ENCODE measurements at regions of chr5 and their contacts with region 1.

Region 1: DNA sequence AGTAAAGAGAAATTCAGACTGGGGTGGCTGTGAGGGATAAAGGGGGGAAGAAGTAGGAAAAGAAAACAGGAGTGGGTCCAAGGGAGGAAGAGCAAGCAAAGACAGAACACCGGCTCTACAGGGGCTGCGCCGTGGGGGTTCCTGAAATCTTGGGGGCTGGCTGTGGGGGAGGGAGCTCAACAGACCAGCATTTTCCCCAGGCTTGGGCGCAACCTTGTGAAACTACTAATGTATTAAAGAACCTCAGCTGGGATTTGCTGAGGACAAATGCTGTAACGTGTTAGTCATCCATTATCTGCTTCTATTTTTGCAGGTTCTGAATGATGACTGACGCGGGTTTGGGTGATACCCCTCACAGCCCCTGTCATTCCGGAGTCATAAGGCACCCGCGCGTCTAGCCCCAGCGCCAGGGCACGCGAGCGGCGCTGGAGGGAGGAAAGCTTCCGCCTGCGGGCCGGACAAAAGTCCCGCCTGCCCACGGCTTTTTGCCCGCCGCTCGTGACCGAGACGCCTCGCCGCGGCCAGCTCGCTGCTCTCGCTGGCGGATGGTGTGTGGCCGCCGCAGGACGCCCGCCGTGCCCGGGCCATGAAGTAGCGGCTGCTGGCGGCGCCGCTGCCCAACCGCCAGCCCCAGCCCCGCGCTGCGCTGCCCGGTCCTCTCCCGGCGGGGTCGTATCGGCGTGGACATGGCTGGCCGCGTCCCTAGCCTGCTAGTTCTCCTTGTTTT is 110.6 kb downstream of the PAM start:
- DNase-seq: peak in 8 of 10 donors; percentile 28 to 72 (median 50)
- H3K4me3 ChIP-seq: peak overlapping the region; percentile 45 to 81 (median 69)
- H3K27ac ChIP-seq: peak overlapping the region in 55 of 59 donors; percentile 4 to 93 (median 72)
- H3K27me3 ChIP-seq: no peaks in the 10 kb centered on the region
- CTCF ChIP-seq: peak in 3 of 56 donors; percentile 10 to 21 (median 10)

Region 2: DNA sequence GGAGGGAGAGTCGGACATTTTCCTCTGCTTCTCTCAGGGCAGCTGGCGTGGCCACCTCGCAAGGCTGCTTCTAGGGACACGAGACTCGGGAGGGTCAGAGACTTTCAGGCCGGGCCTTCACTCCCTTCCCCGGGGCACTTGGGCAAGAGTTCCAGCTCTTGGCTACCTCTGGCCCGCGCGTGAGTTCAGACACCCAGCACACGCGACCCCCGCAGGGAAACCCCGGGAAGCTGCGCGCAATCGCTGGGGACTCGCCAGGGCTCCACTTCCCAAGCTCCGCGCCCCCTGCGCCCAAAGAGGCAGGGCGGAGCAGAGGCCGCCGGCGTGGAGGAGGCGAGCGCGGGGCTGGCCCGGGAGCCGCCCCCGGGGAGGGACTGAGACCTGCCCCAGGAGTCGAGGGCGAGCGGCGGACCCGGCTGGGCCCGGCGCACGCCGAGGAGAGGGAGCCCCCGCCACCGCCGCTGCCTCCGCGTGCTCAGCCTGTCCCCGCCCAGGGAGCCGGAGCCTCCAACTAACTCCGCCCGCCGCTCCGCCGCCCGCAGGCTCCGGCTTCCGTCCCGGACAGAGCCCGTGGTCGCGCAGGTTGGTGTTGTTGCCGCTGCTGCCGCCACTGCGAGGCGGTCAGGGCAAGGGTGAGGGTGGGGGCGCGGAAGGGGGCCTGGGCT is 110.8 kb before region 1 on chr5 and contains the start of gene PAM:
- intact Hi-C with region 1: loop called in 1 of 2 experiments (anchors 10 kb)
- DNase-seq: peak in 9 of 10 donors; percentile 34 to 81 (median 68)
- H3K4me3 ChIP-seq: peak within 1 kb of the TSS; percentile 53 to 89 (median 80)
- H3K27ac ChIP-seq: peak within 1 kb of the TSS in 54 of 59 donors; percentile 11 to 86 (median 71)
- H3K27me3 ChIP-seq: no peaks in the 10 kb centered on the region
- CTCF ChIP-seq: peak in 1 of 56 donors; percentile 9
- total RNA-seq, gene PAM: 60.2 to 261 (median 158) TPM

Region 3: DNA sequence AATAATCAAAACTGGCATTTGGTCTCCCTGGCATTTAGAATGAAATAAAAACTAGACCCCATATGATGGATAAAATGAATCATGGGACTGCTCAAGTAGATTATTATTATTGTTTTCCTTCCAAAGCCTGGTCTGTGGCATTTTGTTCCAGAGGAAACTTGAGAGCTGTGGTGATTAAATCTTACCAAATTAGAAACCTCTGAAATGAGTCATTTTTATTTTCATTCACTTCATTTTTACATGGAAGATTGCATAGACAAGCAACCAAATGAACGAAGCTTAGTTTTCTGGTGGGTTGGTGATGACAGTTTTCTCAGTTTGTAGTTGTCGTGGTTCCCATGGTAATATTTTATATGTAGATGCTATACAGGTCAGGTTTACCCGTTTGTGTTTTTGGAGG is 87.2 kb before region 1 on chr5:
- intact Hi-C with region 1: no loop called
- DNase-seq: no peak
- H3K4me3 ChIP-seq: no peak overlapping the region
- H3K27ac ChIP-seq: peak overlapping the region in 13 of 59 donors; percentile 1 to 71 (median 35)
- H3K27me3 ChIP-seq: no peaks in the 10 kb centered on the region
- CTCF ChIP-seq: no peak